CD8-positive, alpha-beta T cell (primary cell): ENCODE measurements at regions of chr1 and their contacts with region 1.

Region 1: GRCh38 chr1:212070720-212071302 is 35.3 kb downstream of the DTL start:
- DNase-seq: peak in 2 of 9 experiments; percentile 60 to 72
- ATAC-seq: peak; percentile 68
- H3K4me3 ChIP-seq: no peak overlapping the region
- H3K4me3 Mint-ChIP-seq: no peak overlapping the region
- H3K27ac ChIP-seq: no peak overlapping the region
- H3K27ac Mint-ChIP-seq: no peak overlapping the region
- H3K4me1 ChIP-seq: no peaks in the 10 kb centered on the region
- H3K4me1 Mint-ChIP-seq: no peaks in the 10 kb centered on the region
- H3K27me3 ChIP-seq: no peaks in the 10 kb centered on the region
- H3K27me3 Mint-ChIP-seq: no peaks in the 10 kb centered on the region
- CTCF ChIP-seq: peak; percentile 71

Region 2: GRCh38 chr1:212089560-212090163 is 18.9 kb after region 1 on chr1:
- CTCF ChIA-PET with region 1: interaction called, 10 read pairs
- POLR2A ChIA-PET with region 1: no interaction called
- intact Hi-C with region 1: no loop called
- DNase-seq: no peak
- ATAC-seq: no peak
- H3K4me3 ChIP-seq: no peak overlapping the region
- H3K4me3 Mint-ChIP-seq: no peak overlapping the region
- H3K27ac ChIP-seq: no peak overlapping the region
- H3K27ac Mint-ChIP-seq: no peak overlapping the region
- H3K4me1 ChIP-seq: no peaks in the 10 kb centered on the region
- H3K4me1 Mint-ChIP-seq: peaks cover 10% of the 10 kb centered on the region
- H3K27me3 ChIP-seq: no peaks in the 10 kb centered on the region
- H3K27me3 Mint-ChIP-seq: no peaks in the 10 kb centered on the region
- CTCF ChIP-seq: no peak

Region 3: DNA sequence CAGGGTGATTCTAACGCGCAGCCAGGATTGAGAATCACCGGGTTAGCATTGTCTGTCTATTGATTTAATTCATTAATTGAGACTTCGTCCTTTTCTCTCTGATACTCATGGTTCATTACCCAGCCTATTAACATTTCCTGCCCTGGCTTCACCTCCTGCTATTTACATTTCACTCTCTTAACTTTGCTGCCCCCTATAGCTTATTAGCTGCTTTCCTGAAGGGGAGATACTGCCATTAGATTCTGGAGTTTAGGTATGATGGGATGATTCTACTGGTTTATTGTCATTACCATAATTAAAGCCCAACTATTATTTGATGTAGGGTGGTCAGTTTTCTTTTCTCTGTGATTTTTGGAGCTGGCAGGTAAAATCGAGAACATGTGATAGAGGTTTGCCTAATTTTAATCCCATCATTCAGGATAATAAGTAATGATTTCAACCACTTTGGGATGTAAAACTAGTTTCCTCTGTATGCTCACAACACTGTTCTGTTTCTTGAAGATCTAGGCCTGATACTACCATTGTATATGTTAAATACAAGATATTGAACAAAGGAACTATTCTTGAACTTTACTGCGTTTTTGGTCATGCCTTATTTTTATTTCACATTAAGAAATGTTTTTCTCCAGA is 220.8 kb after region 1 on chr1:
- CTCF ChIA-PET with region 1: interaction called, 67 read pairs
- POLR2A ChIA-PET with region 1: interaction called, 11 read pairs
- intact Hi-C with region 1: loop called (anchors 1 to 2 kb)
- DNase-seq: peak in 2 of 9 experiments; percentile 71 to 81
- ATAC-seq: peak; percentile 73
- H3K4me3 ChIP-seq: no peak overlapping the region
- H3K4me3 Mint-ChIP-seq: peak overlapping the region; percentile 38
- H3K27ac ChIP-seq: no peak overlapping the region
- H3K27ac Mint-ChIP-seq: peak overlapping the region; percentile 16
- H3K4me1 ChIP-seq: peaks cover 63% of the 10 kb centered on the region
- H3K4me1 Mint-ChIP-seq: peaks cover 87% of the 10 kb centered on the region
- H3K27me3 ChIP-seq: no peaks in the 10 kb centered on the region
- H3K27me3 Mint-ChIP-seq: no peaks in the 10 kb centered on the region
- CTCF ChIP-seq: peak; percentile 73

Region 4: DNA sequence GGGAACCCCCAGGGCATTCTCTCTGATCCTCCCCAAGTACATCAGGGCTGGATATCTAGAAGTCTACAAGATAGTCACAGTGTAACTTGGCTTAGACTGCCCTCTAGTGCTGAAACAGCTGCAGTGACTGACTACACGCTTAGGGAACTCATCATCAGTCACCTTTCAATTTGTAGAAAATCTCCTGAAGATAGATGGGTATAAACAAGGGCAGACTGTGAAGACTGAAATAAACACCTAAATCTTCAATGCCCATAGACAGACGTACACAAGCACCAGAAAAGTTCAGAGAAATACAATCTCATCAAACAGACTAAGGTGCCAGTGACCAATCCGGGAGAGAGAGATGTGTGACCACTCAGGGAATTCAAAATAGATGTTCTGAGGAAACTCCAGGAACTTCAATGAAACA is 297.3 kb after region 1 on chr1:
- CTCF ChIA-PET with region 1: interaction called, 116 read pairs
- POLR2A ChIA-PET with region 1: interaction called, 6 read pairs
- intact Hi-C with region 1: loop called (anchors 1 to 2 kb)
- DNase-seq: peak; percentile 16 to 78 (median 53)
- ATAC-seq: peak; percentile 92
- H3K4me3 ChIP-seq: no peak overlapping the region
- H3K4me3 Mint-ChIP-seq: no peak overlapping the region
- H3K27ac ChIP-seq: no peak overlapping the region
- H3K27ac Mint-ChIP-seq: peak overlapping the region; percentile 20
- H3K4me1 ChIP-seq: no peaks in the 10 kb centered on the region
- H3K4me1 Mint-ChIP-seq: no peaks in the 10 kb centered on the region
- H3K27me3 ChIP-seq: no peaks in the 10 kb centered on the region
- H3K27me3 Mint-ChIP-seq: no peaks in the 10 kb centered on the region
- CTCF ChIP-seq: peak; percentile 79

Region 5: GRCh38 chr1:212463565-212464285 is 392.9 kb after region 1 on chr1:
- CTCF ChIA-PET with region 1: interaction called, 299 read pairs
- POLR2A ChIA-PET with region 1: no interaction called
- intact Hi-C with region 1: no loop called
- DNase-seq: no peak
- ATAC-seq: no peak
- H3K4me3 ChIP-seq: no peak overlapping the region
- H3K4me3 Mint-ChIP-seq: no peak overlapping the region
- H3K27ac ChIP-seq: no peak overlapping the region
- H3K27ac Mint-ChIP-seq: no peak overlapping the region
- H3K4me1 ChIP-seq: no peaks in the 10 kb centered on the region
- H3K4me1 Mint-ChIP-seq: peaks cover 2% of the 10 kb centered on the region
- H3K27me3 ChIP-seq: no peaks in the 10 kb centered on the region
- H3K27me3 Mint-ChIP-seq: no peaks in the 10 kb centered on the region
- CTCF ChIP-seq: no peak